Activated CD8-positive, alpha-beta T cell treated with anti-CD3 and anti-CD28 coated beads, Interleukin-2, amount 10 ng/mL, durations not matched to agents 7 days and 5 days (primary cell): ENCODE measurements at regions of chr1 and their contacts with region 1.

Region 1: DNA sequence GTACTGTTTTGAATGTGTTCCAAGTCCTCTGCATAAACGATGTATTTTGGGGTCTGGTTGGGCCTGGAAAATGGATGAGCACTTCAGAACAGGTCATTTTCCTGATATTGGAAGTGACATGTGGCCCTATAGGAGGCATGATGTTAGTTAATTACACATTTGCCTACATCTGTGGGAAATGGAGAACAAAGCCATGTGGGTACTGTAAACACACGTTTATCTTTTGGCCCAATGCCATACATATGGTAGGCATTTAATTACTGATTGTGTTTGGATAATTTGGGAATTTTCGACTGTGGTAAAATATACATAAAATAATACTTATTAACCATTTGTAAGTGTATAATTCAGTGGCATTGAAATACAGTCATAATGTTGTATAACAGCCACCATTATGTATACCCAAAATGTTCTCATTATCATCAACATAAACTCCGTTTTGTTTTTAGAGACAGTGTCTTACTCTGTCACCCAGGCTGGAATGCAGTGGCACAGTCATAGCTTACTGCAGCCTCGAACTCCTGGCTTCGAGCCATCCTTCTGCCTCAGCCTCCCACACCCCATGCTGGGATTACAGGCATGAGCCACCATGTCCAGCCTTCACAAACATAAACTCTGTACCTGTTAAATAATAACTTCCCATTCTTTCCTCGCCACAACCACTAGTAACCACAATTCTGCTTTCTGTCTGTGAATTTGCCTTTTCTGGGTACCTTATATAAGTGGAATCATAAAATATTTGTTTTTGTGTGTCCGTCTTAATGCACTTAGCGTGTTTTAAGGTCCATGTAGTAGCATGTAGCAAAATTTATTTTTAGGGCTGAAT is 11.9 kb upstream of the RNPEP start:
- DNase-seq: no peak
- ATAC-seq: no peak
- H3K4me3 Mint-ChIP-seq: no peak overlapping the region
- H3K27ac Mint-ChIP-seq: no peak overlapping the region
- H3K4me1 Mint-ChIP-seq: peaks cover 5% of the 10 kb centered on the region
- H3K27me3 Mint-ChIP-seq: peaks cover 8% of the 10 kb centered on the region

Region 2: DNA sequence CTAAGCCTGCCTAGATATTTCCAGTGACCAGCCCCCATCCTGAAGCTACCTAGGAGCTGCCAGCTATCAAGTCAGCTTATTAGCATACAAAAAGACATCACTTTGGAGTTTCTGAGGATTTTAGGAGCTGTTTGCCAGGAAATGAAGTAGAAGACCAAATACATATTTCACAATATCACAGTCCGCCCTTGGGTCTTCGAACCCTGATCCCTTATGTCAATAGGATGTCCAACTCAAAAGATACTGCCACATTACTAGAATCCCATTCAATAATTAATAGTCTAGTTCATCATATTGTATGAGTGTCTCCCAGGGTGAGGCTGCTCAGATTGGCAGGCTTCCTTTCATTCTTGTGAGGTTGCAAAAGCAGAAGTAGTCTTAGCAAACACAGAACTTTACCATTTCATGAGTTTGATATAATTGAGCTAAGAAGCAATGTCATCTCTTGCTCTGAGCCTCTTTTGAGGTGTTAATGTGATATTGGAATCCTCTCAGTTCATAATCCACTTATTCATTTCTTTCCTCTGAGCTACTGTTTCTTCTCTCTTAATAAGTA is 128.0 kb before region 1 on chr1:
- CTCF ChIA-PET with region 1: no interaction called
- POLR2A ChIA-PET with region 1: no interaction called
- DNase-seq: no peak
- ATAC-seq: no peak
- H3K4me3 Mint-ChIP-seq: no peak overlapping the region
- H3K27ac Mint-ChIP-seq: no peak overlapping the region
- H3K4me1 Mint-ChIP-seq: peaks cover 4% of the 10 kb centered on the region
- H3K27me3 Mint-ChIP-seq: no peaks in the 10 kb centered on the region

Region 3: DNA sequence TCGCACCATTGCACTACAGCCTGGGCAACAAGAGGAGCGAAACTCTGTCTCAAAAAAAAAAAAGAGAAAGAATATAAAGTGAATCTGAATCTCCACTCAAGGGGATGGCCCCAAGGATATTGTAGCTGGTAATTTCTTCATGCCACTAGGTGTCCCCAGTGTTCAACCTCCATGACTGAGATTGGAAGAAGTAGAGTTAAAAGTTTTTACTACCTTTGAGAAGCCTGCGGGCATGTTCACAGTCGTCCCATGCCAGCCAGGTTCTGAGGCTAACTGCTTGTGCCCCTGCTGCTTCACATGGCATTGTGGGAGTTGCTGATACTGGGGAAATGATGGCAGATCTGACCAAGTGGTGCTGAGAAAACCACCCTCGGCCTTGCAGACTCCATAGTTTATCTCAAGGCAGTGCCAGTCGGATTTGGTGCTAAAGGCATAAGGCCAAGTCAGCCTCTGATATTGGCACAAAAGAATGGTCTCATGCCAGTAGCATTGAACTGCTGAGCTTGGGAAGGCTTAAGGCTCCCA is 92.6 kb before region 1 on chr1:
- CTCF ChIA-PET with region 1: interaction called, 40 read pairs
- POLR2A ChIA-PET with region 1: no interaction called
- DNase-seq: peak; percentile 47
- ATAC-seq: peak; percentile 69
- H3K4me3 Mint-ChIP-seq: no peak overlapping the region
- H3K27ac Mint-ChIP-seq: no peak overlapping the region
- H3K4me1 Mint-ChIP-seq: no peaks in the 10 kb centered on the region
- H3K27me3 Mint-ChIP-seq: no peaks in the 10 kb centered on the region

Region 4: GRCh38 chr1:201937624-201938213 is 32.8 kb before region 1 on chr1:
- CTCF ChIA-PET with region 1: no interaction called
- POLR2A ChIA-PET with region 1: no interaction called
- DNase-seq: no peak
- ATAC-seq: no peak
- H3K4me3 Mint-ChIP-seq: no peak overlapping the region
- H3K27ac Mint-ChIP-seq: no peak overlapping the region
- H3K4me1 Mint-ChIP-seq: no peaks in the 10 kb centered on the region
- H3K27me3 Mint-ChIP-seq: peaks cover 28% of the 10 kb centered on the region

Region 5: GRCh38 chr1:201982623-201983379 is 12.3 kb after region 1 on chr1 and contains the start of gene RNPEP:
- CTCF ChIA-PET with region 1: interaction called, 11 read pairs
- POLR2A ChIA-PET with region 1: no interaction called
- DNase-seq: peak; percentile 65
- ATAC-seq: peak; percentile 85
- H3K4me3 Mint-ChIP-seq: peak within 1 kb of the TSS; percentile 89
- H3K27ac Mint-ChIP-seq: peak within 1 kb of the TSS; percentile 84
- H3K4me1 Mint-ChIP-seq: peaks cover 19% of the 10 kb centered on the region
- H3K27me3 Mint-ChIP-seq: peaks cover 8% of the 10 kb centered on the region
- total RNA-seq, gene RNPEP: 32.0 to 32.2 TPM

Region 6: GRCh38 chr1:202037706-202038296 is 67.3 kb after region 1 on chr1:
- CTCF ChIA-PET with region 1: no interaction called
- POLR2A ChIA-PET with region 1: no interaction called
- DNase-seq: no peak
- ATAC-seq: no peak
- H3K4me3 Mint-ChIP-seq: no peak overlapping the region
- H3K27ac Mint-ChIP-seq: no peak overlapping the region
- H3K4me1 Mint-ChIP-seq: no peaks in the 10 kb centered on the region
- H3K27me3 Mint-ChIP-seq: no peaks in the 10 kb centered on the region

Region 7: DNA sequence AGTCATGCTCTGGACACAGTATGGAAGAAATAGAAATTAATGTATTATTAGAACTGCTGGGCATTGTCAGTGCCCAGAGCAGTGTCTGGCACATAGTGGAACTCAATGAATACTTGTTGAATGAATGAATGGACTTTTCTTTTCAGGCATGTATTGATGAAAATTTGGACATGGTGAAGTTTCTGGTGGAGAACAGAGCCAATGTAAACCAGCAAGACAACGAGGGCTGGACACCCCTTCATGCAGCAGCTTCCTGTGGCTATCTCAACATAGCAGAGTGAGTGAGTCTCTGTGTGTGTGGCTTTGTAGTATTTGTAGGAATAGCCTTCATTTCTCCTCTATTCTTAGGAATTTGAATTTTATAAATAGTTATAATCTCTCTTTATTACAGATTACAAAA is 446.1 kb after region 1 on chr1:
- CTCF ChIA-PET with region 1: no interaction called
- POLR2A ChIA-PET with region 1: no interaction called
- DNase-seq: no peak
- ATAC-seq: no peak
- H3K4me3 Mint-ChIP-seq: no peak overlapping the region
- H3K27ac Mint-ChIP-seq: no peak overlapping the region
- H3K4me1 Mint-ChIP-seq: no peaks in the 10 kb centered on the region
- H3K27me3 Mint-ChIP-seq: no peaks in the 10 kb centered on the region